Activated naive CD4-positive, alpha-beta T cell treated with anti-CD3 and anti-CD28 coated beads for 36 hours (primary cell): ENCODE measurements at regions of chr19 and their contacts with region 1.

Region 1: DNA sequence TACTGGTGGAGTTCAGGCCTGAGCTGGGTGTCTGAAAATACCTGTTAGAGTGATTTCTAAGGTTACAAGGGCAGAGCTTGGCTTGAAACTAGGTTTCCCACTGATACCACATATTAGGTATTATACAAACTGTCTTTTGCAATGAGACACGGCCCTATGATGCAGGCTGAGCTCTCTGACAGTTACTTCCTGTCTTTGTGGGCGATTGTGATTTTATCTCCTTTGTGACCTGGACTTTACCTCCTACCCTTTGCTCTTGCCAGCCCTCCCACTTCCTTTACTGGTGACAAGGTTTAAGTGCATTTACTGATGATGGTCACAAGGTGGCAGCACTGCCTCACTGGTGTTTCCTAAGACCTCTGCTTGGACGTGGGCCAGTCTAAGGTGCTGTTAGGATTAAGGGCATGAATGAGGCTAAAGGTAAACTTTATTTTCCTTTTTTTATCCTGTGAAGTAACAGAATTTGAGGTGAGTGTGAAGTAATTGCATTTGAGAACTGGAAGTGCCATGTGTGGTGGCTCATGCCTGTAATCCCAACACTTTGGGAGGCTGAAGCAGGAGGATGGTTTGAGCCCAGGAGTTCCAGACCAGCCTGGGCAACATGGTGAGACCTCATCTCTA is 7.7 kb upstream of the CXCL17 start:
- DNase-seq: peak; percentile 89
- H3K4me3 Mint-ChIP-seq: no peak overlapping the region
- H3K27ac Mint-ChIP-seq: no peak overlapping the region
- H3K4me1 Mint-ChIP-seq: no peaks in the 10 kb centered on the region
- H3K27me3 Mint-ChIP-seq: no peaks in the 10 kb centered on the region

Region 2: GRCh38 chr19:42352301-42353259 is 97.8 kb before region 1 on chr19:
- CTCF ChIA-PET with region 1: no interaction called
- intact Hi-C with region 1: no loop called
- DNase-seq: no peak
- H3K4me3 Mint-ChIP-seq: no peak overlapping the region
- H3K27ac Mint-ChIP-seq: no peak overlapping the region
- H3K4me1 Mint-ChIP-seq: no peaks in the 10 kb centered on the region
- H3K27me3 Mint-ChIP-seq: no peaks in the 10 kb centered on the region

Region 3: GRCh38 chr19:42465827-42466280 is 15.4 kb after region 1 on chr19:
- CTCF ChIA-PET with region 1: interaction called, 15 read pairs
- intact Hi-C with region 1: no loop called
- DNase-seq: no peak
- H3K4me3 Mint-ChIP-seq: no peak overlapping the region
- H3K27ac Mint-ChIP-seq: no peak overlapping the region
- H3K4me1 Mint-ChIP-seq: peaks cover 14% of the 10 kb centered on the region
- H3K27me3 Mint-ChIP-seq: no peaks in the 10 kb centered on the region

Region 4: DNA sequence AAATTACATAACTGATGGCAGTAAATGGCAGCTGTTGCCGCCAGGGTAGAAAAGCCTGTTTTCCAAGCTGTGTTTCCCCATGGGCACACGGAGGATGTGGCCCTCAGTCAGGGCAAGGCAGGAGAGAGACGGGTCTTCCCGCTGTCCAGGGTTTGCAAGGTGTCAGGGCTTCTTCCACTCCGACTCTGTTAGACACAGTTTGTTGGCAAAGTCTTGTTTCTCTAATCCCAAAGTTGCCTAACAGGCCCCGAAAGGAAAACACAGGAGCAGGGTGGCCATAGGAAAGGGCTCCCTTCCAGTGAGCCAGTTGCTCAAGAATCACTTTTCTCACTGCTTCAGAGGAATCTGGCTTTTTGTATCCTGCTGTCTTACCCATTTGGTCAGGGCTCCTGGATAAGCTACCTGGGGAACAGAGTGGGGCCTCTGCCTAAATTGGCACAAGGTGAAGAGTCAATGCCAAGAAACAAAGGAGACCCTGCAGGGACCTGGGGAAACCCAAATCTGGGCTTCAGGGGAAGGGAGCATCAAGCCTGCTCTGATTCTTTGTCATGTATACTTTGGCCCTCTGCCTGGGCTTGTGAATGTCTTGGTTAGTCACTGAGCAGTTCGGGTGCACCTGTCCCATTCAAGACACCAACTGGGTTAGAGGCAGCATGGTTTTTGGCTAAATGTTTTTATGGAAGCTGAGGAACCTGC is 21.3 kb after region 1 on chr19:
- CTCF ChIA-PET with region 1: interaction called, 15 read pairs
- intact Hi-C with region 1: no loop called
- DNase-seq: no peak
- H3K4me3 Mint-ChIP-seq: no peak overlapping the region
- H3K27ac Mint-ChIP-seq: no peak overlapping the region
- H3K4me1 Mint-ChIP-seq: peaks cover 9% of the 10 kb centered on the region
- H3K27me3 Mint-ChIP-seq: no peaks in the 10 kb centered on the region

Region 5: DNA sequence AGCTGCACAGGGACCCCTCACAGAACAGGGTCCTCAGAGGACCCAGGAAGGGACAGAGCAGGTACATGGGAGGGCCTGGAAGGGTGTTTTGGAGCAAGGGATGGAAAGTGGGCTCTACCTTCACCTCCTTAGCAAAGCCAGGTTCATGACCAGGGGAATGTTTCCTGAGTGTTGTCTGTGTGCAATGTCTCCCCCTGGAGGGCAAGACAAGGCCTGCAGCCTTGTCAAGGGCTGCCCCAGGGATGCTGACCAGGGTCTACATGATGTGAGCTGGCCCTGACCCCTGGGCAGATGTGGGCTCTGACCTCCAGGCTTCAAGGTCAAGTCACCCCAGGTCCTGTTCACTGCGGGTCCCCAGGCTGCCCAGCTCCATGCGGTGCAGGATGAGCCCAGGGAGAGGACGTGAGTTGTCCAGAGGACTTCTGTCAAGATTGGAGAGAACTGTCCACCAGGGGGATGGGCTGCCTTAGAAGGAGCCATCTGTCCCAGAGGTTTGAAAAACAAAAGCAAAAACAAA is 78.9 kb after region 1 on chr19:
- CTCF ChIA-PET with region 1: interaction called, 123 read pairs
- intact Hi-C with region 1: loop called (anchors 1 kb)
- DNase-seq: peak; percentile 85
- H3K4me3 Mint-ChIP-seq: peak overlapping the region; percentile 75
- H3K27ac Mint-ChIP-seq: peak overlapping the region; percentile 82
- H3K4me1 Mint-ChIP-seq: peaks cover 25% of the 10 kb centered on the region
- H3K27me3 Mint-ChIP-seq: no peaks in the 10 kb centered on the region

Region 6: GRCh38 chr19:42563352-42564210 is 113.2 kb after region 1 on chr19:
- CTCF ChIA-PET with region 1: interaction called, 9 read pairs
- intact Hi-C with region 1: loop called (anchors 1 kb)
- DNase-seq: peak; percentile 34
- H3K4me3 Mint-ChIP-seq: no peak overlapping the region
- H3K27ac Mint-ChIP-seq: no peak overlapping the region
- H3K4me1 Mint-ChIP-seq: no peaks in the 10 kb centered on the region
- H3K27me3 Mint-ChIP-seq: peaks cover 5% of the 10 kb centered on the region

Region 7: DNA sequence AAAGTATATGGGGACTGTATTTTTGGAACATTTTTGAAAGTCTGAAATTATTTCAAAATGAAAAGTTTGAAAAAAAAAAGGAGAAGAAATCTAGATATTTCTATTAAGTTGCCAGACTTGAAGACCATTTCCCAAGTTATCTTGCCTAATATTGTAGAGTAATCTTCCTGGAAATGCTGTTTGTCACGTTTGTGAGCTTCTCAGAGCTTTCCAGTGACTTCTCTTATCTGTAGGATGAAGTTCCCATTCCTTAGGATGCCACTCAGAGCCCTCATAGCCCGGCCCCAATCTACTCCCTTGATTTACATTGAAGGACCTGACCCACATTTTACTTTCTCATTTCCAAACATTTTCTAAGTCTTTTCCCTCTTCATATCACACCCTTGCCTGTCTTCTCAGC is 120.7 kb after region 1 on chr19:
- CTCF ChIA-PET with region 1: interaction called, 9 read pairs
- intact Hi-C with region 1: loop called (anchors 1 kb)
- DNase-seq: no peak
- H3K4me3 Mint-ChIP-seq: no peak overlapping the region
- H3K27ac Mint-ChIP-seq: no peak overlapping the region
- H3K4me1 Mint-ChIP-seq: no peaks in the 10 kb centered on the region
- H3K27me3 Mint-ChIP-seq: no peaks in the 10 kb centered on the region

Region 8: GRCh38 chr19:42596391-42597072 is 146.1 kb after region 1 on chr19:
- CTCF ChIA-PET with region 1: interaction called, 10 read pairs
- intact Hi-C with region 1: loop called (anchors 1 kb)
- DNase-seq: peak; percentile 44
- H3K4me3 Mint-ChIP-seq: no peak overlapping the region
- H3K27ac Mint-ChIP-seq: no peak overlapping the region
- H3K4me1 Mint-ChIP-seq: no peaks in the 10 kb centered on the region
- H3K27me3 Mint-ChIP-seq: peaks cover 4% of the 10 kb centered on the region